ENCODE measurements at regions of chr1 and their contacts with region 1.

Region 1: DNA sequence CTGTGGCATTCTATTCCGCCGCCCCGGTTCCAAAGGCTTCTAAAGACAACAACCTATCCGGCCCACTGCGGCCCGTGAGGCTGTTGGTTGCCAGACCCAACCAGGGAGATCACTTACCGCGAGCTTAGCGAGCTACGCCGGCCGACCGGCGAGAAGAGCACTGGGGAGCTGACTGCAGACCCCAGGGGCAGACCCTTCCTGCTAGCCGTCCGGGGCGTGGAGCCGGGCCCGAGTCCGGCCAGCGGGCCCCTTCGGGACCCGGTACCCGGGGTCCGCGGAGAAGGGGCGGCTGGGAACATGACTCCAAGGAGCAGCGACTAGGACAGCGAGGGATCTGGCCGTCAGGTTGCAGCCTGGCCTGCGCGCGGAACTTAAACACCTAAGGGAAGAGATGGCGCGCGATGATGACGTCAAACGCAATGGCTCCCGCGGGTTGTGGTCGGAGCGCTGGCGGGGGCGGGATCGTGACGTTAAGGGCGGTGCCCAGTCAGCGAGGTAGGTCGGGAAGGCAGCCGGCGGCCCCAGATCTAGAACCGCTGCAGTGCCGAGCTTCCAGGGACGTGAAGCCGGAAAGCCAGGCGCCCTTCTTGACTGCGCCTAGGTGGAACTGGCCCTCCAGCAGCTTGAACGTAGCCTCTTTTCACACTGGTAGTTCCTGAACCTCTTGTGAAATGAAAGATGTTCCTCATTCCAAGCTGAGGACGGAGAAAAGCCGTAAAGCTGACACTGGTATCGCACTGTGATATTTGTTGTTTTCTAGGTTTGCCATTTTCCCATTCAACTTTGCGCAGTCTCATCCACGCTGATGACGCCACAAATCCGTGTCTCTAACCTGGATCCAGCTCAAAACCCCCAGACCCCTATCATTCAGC is at the start of gene NUP133:
- DNase-seq: peak; percentile 94 to 100 (median 98)
- ATAC-seq: peak; percentile 97 to 98 (median 98)
- H3K4me3 ChIP-seq: peak within 1 kb of the TSS; percentile 84 to 98
- H3K4me3 Mint-ChIP-seq: peak within 1 kb of the TSS; percentile 89 to 92 (median 89)
- H3K27ac ChIP-seq: peak within 1 kb of the TSS; percentile 83
- H3K27ac Mint-ChIP-seq: peak within 1 kb of the TSS; percentile 98
- H3K4me1 ChIP-seq: peaks cover 14% of the 10 kb centered on the region in 2 experiments
- H3K4me1 Mint-ChIP-seq: peaks cover 20 to 44% (median 41%) of the 10 kb centered on the region in 3 donors
- H3K27me3 ChIP-seq: no peaks in the 10 kb centered on the region
- H3K27me3 Mint-ChIP-seq: peaks cover 0 to 2% of the 10 kb centered on the region in 2 donors
- total RNA-seq, gene NUP133: 32.3 to 47.6 (median 45.3) TPM

Region 2: DNA sequence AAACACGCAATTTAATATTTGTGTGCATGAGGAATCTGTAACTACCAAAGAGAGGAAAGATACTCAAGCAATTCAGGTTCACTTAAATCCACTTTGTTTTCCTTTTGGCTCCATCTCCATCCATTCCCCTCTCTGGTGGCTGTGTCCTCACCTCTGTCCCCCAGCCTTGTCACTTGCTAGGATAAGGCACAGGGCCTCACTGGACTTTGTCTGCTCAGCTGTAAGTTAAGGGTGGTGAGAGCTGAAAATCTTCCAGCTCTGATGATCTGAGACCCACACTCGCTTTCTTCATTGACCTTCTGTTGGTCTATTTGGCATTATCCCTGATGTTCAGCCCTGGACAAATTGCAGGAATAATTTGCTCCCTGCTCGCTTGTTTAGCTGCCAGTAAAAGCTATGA is 716.4 kb before region 1 on chr1:
- CTCF ChIA-PET with region 1: interaction called in 1 of 2 experiments, 10 read pairs
- POLR2A ChIA-PET with region 1: no interaction called
- DNase-seq: no peak
- ATAC-seq: no peak
- H3K4me3 ChIP-seq: no peak overlapping the region
- H3K4me3 Mint-ChIP-seq: no peak overlapping the region
- H3K27ac ChIP-seq: no peak overlapping the region
- H3K27ac Mint-ChIP-seq: no peak overlapping the region
- H3K4me1 ChIP-seq: peaks cover 5 to 59% of the 10 kb centered on the region in 2 experiments
- H3K4me1 Mint-ChIP-seq: peaks cover 8 to 16% (median 10%) of the 10 kb centered on the region in 3 donors
- H3K27me3 ChIP-seq: no peaks in the 10 kb centered on the region
- H3K27me3 Mint-ChIP-seq: no peaks in the 10 kb centered on the region

Region 3: DNA sequence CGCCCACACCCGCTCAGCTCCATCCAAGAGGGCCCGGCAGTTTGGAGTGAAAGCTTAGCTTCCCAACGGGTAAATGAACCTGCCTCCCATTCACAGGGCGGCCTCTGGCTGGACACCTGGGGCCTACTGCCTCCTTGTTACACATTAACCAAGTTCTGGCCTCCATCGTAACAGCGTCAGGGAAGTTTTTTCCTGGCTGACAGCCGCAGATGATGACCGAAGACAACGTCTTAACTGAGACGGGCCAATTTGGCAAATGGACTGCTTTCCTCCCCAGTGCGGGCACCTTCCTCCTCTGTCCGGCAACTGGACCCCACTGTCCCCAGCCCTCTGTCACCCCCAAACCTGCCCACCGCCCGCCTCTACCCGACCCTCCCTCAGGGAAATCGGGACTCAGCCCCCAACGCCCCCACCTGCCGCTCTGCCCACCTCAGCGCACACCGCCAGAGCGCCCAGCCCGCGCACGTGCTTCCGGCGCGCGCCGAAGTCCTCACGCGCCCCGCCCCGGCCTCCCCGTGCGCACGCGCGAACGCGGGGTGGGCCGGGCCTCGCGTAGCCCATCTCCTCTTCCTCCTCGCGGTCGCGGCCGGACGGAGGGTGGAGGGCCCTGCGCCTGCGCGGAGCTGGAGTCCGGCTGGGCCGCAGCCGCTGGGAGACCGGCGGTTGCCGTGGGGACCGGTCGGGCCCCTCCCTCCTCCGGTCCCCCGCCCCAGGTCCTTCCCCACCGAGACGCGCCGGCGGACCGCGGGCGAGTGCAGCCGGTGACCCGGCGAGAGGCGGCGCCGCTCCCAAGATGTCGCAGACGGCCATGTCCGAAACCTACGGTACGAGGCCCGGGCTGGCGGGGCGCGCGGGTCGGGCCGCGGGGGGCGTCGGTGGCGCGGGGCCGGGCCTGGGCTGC is 237.4 kb before region 1 on chr1 and contains the start of gene RAB4A:
- CTCF ChIA-PET with region 1: no interaction called
- POLR2A ChIA-PET with region 1: no interaction called
- DNase-seq: peak; percentile 37 to 88 (median 60)
- ATAC-seq: peak; percentile 86 to 89 (median 88)
- H3K4me3 ChIP-seq: peak within 1 kb of the TSS; percentile 65 to 78
- H3K4me3 Mint-ChIP-seq: peak within 1 kb of the TSS; percentile 84 to 93 (median 90)
- H3K27ac ChIP-seq: no peak within 1 kb of the TSS
- H3K27ac Mint-ChIP-seq: peak within 1 kb of the TSS; percentile 77 to 89
- H3K4me1 ChIP-seq: peaks cover 13 to 22% of the 10 kb centered on the region in 2 experiments
- H3K4me1 Mint-ChIP-seq: peaks cover 33 to 40% (median 34%) of the 10 kb centered on the region in 3 donors
- H3K27me3 ChIP-seq: no peaks in the 10 kb centered on the region
- H3K27me3 Mint-ChIP-seq: no peaks in the 10 kb centered on the region
- total RNA-seq, gene RAB4A: 25.4 to 52.1 (median 44.6) TPM

Region 4: GRCh38 chr1:229470406-229471043 is 37.7 kb before region 1 on chr1:
- CTCF ChIA-PET with region 1: no interaction called
- POLR2A ChIA-PET with region 1: interaction called in 1 of 2 experiments, 10 read pairs
- DNase-seq: no peak
- ATAC-seq: no peak
- H3K4me3 ChIP-seq: no peak overlapping the region
- H3K4me3 Mint-ChIP-seq: no peak overlapping the region
- H3K27ac ChIP-seq: no peak overlapping the region
- H3K27ac Mint-ChIP-seq: no peak overlapping the region
- H3K4me1 ChIP-seq: no peaks in the 10 kb centered on the region
- H3K4me1 Mint-ChIP-seq: peaks cover 0 to 6% (median 0%) of the 10 kb centered on the region in 3 donors
- H3K27me3 ChIP-seq: no peaks in the 10 kb centered on the region
- H3K27me3 Mint-ChIP-seq: no peaks in the 10 kb centered on the region

Measured in T-cell (primary cell).